ENCODE measurements at regions of chr22 and their contacts with region 1.

Region 1: GRCh38 chr22:36506637-36507517 is at the start of gene FOXRED2:
- DNase-seq: peak; percentile 84 to 93 (median 90)
- ATAC-seq: peak; percentile 94 to 95
- H3K4me3 Mint-ChIP-seq: peak within 1 kb of the TSS; percentile 67 to 85 (median 80)
- H3K27ac Mint-ChIP-seq: peak within 1 kb of the TSS; percentile 14 to 92 (median 78)
- H3K4me1 Mint-ChIP-seq: peaks cover 13 to 31% (median 19%) of the 10 kb centered on the region in 4 donors
- H3K27me3 Mint-ChIP-seq: no peaks in the 10 kb centered on the region
- polyA plus RNA-seq, gene FOXRED2: 1.8 to 6.8 (median 3.9) TPM

Region 2: GRCh38 chr22:36365020-36365411 is 141.9 kb before region 1 on chr22:
- POLR2A ChIA-PET with region 1: no interaction called
- DNase-seq: peak; percentile 65 to 93 (median 86)
- ATAC-seq: peak; percentile 76 to 94
- H3K4me3 Mint-ChIP-seq: peak overlapping the region; percentile 50 to 94 (median 80)
- H3K27ac Mint-ChIP-seq: peak overlapping the region; percentile 90 to 98 (median 96)
- H3K4me1 Mint-ChIP-seq: peaks cover 58 to 99% (median 97%) of the 10 kb centered on the region in 4 donors
- H3K27me3 Mint-ChIP-seq: no peaks in the 10 kb centered on the region

Region 3: DNA sequence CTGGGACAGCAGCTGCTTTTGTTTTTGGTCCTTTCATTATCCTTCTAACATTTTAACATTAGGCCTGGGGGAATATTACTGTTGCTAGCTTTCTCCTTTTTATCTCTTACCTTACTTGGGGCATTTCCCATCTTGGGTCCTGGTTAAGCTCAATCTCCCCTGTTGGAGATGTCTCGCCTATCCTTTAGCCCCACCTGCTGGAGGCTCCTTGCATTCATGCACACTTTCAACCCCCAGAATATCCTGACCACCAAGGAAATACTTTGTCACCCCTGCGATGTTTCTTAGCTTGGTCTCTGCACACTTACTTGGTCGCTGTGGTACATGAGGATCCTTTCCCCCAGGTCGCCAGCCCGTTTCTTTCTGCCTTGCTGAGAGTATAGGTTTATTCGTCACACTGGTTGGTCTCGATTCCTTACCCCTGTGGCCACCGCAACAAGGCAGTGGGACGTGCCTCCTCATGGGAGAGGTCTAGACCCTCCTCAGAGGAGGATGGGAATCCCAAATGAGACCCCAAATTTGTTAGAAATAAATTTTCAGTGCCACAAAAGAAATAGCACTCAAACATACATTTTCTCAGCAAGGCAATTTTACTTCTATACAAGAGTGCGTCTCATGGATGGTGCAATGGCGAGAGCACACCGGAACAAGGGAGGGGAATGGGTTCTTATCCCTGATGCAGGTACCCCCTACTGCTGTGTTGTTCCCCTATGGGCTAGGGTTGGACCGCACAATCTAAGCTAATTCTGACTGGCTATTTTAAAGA is 20.1 kb before region 1 on chr22:
- POLR2A ChIA-PET with region 1: interaction called, 15 read pairs
- DNase-seq: peak; percentile 47 to 83 (median 64)
- ATAC-seq: no peak
- H3K4me3 Mint-ChIP-seq: no peak overlapping the region
- H3K27ac Mint-ChIP-seq: peak overlapping the region in 1 of 10 donors; percentile 0
- H3K4me1 Mint-ChIP-seq: peaks cover 8 to 13% (median 10%) of the 10 kb centered on the region in 4 donors
- H3K27me3 Mint-ChIP-seq: no peaks in the 10 kb centered on the region

Region 4: GRCh38 chr22:36528795-36529751 is 22.2 kb after region 1 on chr22 and contains the start of gene EIF3D:
- POLR2A ChIA-PET with region 1: interaction called, 30 read pairs
- DNase-seq: peak; percentile 93 to 99 (median 98)
- ATAC-seq: peak; percentile 92
- H3K4me3 Mint-ChIP-seq: peak within 1 kb of the TSS; percentile 84 to 97 (median 93)
- H3K27ac Mint-ChIP-seq: peak within 1 kb of the TSS; percentile 95 to 100 (median 98)
- H3K4me1 Mint-ChIP-seq: peaks cover 4 to 34% (median 22%) of the 10 kb centered on the region in 4 donors
- H3K27me3 Mint-ChIP-seq: no peaks in the 10 kb centered on the region
- polyA plus RNA-seq, gene EIF3D: 129 to 190 (median 173) TPM

Region 5: GRCh38 chr22:36649066-36649465 is 142.2 kb after region 1 on chr22:
- POLR2A ChIA-PET with region 1: no interaction called
- DNase-seq: no peak
- ATAC-seq: no peak
- H3K4me3 Mint-ChIP-seq: no peak overlapping the region
- H3K27ac Mint-ChIP-seq: no peak overlapping the region
- H3K4me1 Mint-ChIP-seq: no peaks in the 10 kb centered on the region
- H3K27me3 Mint-ChIP-seq: peaks cover 27 to 49% (median 31%) of the 10 kb centered on the region in 5 donors